K562 (cell line): ENCODE measurements at regions of chr10 and their contacts with region 1.

Region 1: DNA sequence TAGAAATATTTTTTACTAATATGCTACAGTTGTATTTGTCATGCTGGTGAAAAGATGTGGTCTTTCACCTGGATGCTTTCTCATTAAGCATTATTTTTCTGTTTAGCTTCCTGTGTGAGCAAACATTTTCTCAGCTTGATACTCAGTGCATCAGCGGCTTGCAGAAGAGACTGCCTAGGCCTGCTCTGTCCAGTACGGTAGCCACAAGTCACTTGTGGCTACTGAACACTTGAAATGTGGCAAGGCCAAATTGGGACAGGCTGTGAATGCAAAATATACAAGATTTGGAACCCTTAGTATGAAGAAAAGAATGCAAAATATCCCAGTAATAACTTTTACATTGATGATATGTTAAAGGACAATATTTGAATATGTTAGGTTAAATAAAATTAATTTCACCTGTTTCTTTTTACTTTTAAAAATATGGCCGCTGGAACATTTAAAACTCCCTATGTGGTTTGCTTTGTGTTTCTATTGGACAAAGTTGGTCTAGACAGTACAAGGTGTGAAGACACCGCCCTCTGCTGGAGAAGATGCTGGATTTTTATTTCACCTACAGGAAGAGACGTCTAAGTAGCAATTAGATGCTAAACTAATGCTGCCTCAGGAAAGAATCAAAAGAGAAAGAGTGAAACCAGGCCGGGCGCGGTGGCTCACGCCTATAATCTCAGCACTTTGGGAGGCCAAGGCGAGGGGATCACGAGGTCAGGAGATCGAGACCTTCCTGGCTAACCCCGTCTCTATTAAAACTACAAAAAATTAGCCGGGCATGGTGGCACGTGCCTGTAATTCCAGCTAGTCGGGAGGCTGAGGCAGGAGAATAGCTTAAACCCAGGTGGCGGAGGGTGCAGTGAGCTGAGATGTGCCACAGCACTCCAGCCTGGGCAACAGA is 5.3 kb downstream of the SRGN start:
- DNase-seq: peak; percentile 74 to 93 (median 80)
- ATAC-seq: peak; percentile 67
- H3K4me3 ChIP-seq: no peak overlapping the region
- H3K27ac ChIP-seq: peak overlapping the region; percentile 2; the same call in 1 of the 3 replicates
- H3K4me1 ChIP-seq: peaks cover 0 to 17% of the 10 kb centered on the region in 2 experiments; a peak in 2 of 5 replicates
- H3K27me3 ChIP-seq: no peaks in the 10 kb centered on the region
- CTCF ChIP-seq: peak; percentile 70 to 92 (median 80)
- EP300 ChIP-seq: no peak
- POLR2A ChIP-seq: no peak
- RAD21 ChIP-seq: peak; percentile 96 to 98

Region 2: GRCh38 chr10:69004821-69005220 is 88.4 kb before region 1 on chr10:
- CTCF ChIA-PET with region 1: interaction called, 84 read pairs
- POLR2A ChIA-PET with region 1: interaction called, 3 read pairs
- in situ Hi-C with region 1: no loop called
- intact Hi-C with region 1: loop called (anchors 1 kb)
- DNase-seq: peak in 2 of 4 experiments; percentile 38 to 56
- ATAC-seq: peak; percentile 83
- H3K4me3 ChIP-seq: no peak overlapping the region
- H3K27ac ChIP-seq: no peak overlapping the region
- H3K4me1 ChIP-seq: no peaks in the 10 kb centered on the region
- H3K27me3 ChIP-seq: no peaks in the 10 kb centered on the region
- CTCF ChIP-seq: peak; percentile 54 to 90 (median 62); a peak in 5 of 6 replicates
- EP300 ChIP-seq: no peak
- POLR2A ChIP-seq: no peak
- RAD21 ChIP-seq: peak; percentile 91 to 98

Region 3: GRCh38 chr10:69123747-69124562 is 30.8 kb after region 1 on chr10 and contains the start of gene VPS26A:
- CTCF ChIA-PET with region 1: interaction called, 5 read pairs
- POLR2A ChIA-PET with region 1: interaction called, 9 read pairs
- in situ Hi-C with region 1: no loop called
- intact Hi-C with region 1: loop called (anchors 2 kb)
- DNase-seq: peak; percentile 99 to 100 (median 100)
- ATAC-seq: peak; percentile 91
- H3K4me3 ChIP-seq: peak within 1 kb of the TSS; percentile 84
- H3K27ac ChIP-seq: peak within 1 kb of the TSS; percentile 90
- H3K4me1 ChIP-seq: peaks cover 10 to 12% of the 10 kb centered on the region in 2 experiments; a peak in 3 of 5 replicates
- H3K27me3 ChIP-seq: no peaks in the 10 kb centered on the region
- CTCF ChIP-seq: peak in 2 of 3 experiments; percentile 21 to 65; a peak in 2 of 6 replicates
- EP300 ChIP-seq: 0 out of 2 replicates have a peak, but pooled peaks have one; percentile 19
- POLR2A ChIP-seq: peak; percentile 98
- RAD21 ChIP-seq: peak in 1 of 2 experiments; percentile 60; a peak in 2 of 4 replicates
- polyA plus RNA-seq, gene VPS26A: 117 to 137 TPM

Region 4: GRCh38 chr10:69222157-69223027 is 129.2 kb after region 1 on chr10:
- CTCF ChIA-PET with region 1: interaction called, 5 read pairs
- POLR2A ChIA-PET with region 1: interaction called, 3 read pairs
- in situ Hi-C with region 1: no loop called
- intact Hi-C with region 1: loop called (anchors 1 kb)
- DNase-seq: peak; percentile 82 to 93 (median 86)
- ATAC-seq: peak; percentile 92
- H3K4me3 ChIP-seq: peak overlapping the region; percentile 24
- H3K27ac ChIP-seq: peak overlapping the region; percentile 94
- H3K4me1 ChIP-seq: peaks cover 9 to 23% of the 10 kb centered on the region in 2 experiments; a peak in 4 of 5 replicates
- H3K27me3 ChIP-seq: no peaks in the 10 kb centered on the region
- CTCF ChIP-seq: peak; percentile 88 to 94 (median 91)
- EP300 ChIP-seq: peak; percentile 61
- POLR2A ChIP-seq: peak; percentile 72
- RAD21 ChIP-seq: peak; percentile 74 to 85

Region 5: GRCh38 chr10:70956029-70956759 is 1863.0 kb after region 1 on chr10:
- CTCF ChIA-PET with region 1: no interaction called
- POLR2A ChIA-PET with region 1: no interaction called
- in situ Hi-C with region 1: no loop called
- intact Hi-C with region 1: no loop called
- DNase-seq: peak; percentile 11 to 52 (median 42)
- ATAC-seq: peak; percentile 82
- H3K4me3 ChIP-seq: no peak overlapping the region
- H3K27ac ChIP-seq: no peak overlapping the region
- H3K4me1 ChIP-seq: no peaks in the 10 kb centered on the region
- H3K27me3 ChIP-seq: peaks cover 2 to 33% of the 10 kb centered on the region in 2 experiments; a peak in 4 of 5 replicates
- CTCF ChIP-seq: peak; percentile 35 to 63 (median 42); a peak in 4 of 6 replicates
- EP300 ChIP-seq: no peak
- POLR2A ChIP-seq: no peak
- RAD21 ChIP-seq: peak in 1 of 2 experiments; percentile 26; a peak in 1 of 4 replicates